Psoas muscle (tissue), 8 donors: ENCODE measurements at regions of chr3 and their contacts with region 1.

Region 1: DNA sequence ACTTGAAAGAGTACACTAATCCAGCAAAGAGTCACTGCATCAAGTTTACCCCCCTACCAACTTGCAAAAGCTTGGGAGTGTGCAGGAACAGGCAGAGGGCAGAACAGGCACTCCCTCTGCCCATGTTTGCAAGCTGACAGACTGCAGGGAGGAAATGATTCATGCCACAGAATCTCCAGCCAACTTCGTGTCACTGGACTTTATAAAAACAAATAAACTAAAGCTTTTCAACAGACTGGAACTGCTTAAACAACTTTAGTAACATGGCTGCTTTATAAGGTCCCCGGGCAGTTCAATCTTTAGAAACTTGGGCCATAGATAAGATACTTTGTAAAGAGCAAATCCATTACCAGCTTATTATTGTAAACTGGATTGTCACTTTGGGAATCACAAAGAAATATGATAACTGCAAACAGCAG is 129.4 kb downstream of the THRB start:
- DNase-seq: peak; percentile 31 to 61
- ATAC-seq: peak; percentile 84 to 95 (median 94)
- H3K4me3 ChIP-seq: no peak overlapping the region
- H3K27ac ChIP-seq: peak overlapping the region; percentile 75
- H3K4me1 ChIP-seq: peaks cover 30% of the 10 kb centered on the region
- H3K27me3 ChIP-seq: no peaks in the 10 kb centered on the region
- CTCF ChIP-seq: peak; percentile 14

Region 2: GRCh38 chr3:24264748-24265158 is 100.5 kb before region 1 on chr3:
- intact Hi-C with region 1: loop called in 1 of 2 experiments (anchors 10 kb)
- DNase-seq: no peak
- ATAC-seq: peak in 3 of 4 donors; percentile 37 to 58 (median 40)
- H3K4me3 ChIP-seq: no peak overlapping the region
- H3K27ac ChIP-seq: no peak overlapping the region
- H3K4me1 ChIP-seq: peaks cover 36% of the 10 kb centered on the region
- H3K27me3 ChIP-seq: no peaks in the 10 kb centered on the region
- CTCF ChIP-seq: peak; percentile 76

Region 3: DNA sequence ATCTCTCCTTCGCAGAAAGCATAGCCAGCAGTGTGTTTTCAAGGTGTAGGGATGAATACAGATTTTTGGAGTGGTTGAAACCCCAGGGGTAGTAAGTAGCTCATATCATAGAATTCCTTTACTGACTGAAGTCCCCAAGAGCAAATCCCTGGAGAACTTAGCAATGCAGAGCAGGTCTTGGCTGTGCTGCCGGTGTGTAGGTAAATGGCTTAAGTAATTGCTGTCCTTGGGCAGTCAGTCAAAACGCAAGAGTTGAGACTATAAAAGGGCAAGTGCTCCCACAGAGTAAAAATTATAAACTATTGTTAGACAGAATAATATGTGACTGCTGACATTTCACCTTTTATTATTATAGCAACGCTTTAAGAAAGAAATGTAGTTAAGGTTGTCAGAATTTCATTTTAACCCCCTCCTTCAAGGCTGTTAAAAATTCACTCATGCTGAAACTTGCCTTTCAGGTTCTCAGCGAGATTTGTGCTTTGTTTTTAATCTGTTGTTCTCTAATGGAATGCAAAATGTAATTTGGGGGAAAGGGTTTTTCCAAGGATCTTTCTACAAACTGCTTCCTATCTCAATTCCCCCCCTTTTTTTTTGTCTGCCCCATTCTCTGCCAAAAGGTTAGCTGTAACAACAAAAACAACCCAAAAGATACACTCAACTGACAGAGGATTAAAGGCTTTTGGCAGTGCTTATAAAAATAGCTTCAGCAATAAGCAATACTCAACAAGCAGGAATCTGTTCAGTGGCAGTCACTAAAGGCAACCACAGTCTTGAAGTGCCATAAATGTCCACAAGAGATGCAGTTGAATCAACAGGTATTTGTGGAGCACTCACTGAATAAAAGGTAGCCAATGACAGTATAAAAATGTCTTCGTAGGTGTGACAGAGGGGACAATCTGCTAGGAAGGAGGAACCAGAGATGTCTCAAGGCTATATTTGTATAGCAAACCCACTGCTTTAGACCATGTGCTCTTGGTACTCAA is 24.2 kb after region 1 on chr3:
- intact Hi-C with region 1: no loop called
- DNase-seq: no peak
- ATAC-seq: peak; percentile 41 to 65 (median 59)
- H3K4me3 ChIP-seq: no peak overlapping the region
- H3K27ac ChIP-seq: peak overlapping the region; percentile 28
- H3K4me1 ChIP-seq: peaks cover 41% of the 10 kb centered on the region
- H3K27me3 ChIP-seq: no peaks in the 10 kb centered on the region
- CTCF ChIP-seq: no peak